ENCODE measurements at regions of chr13 and their contacts with region 1.

Region 1: GRCh38 chr13:27826379-27827353 is 34.4 kb downstream of the GSX1 start:
- DNase-seq: peak; percentile 65
- ATAC-seq: peak; percentile 53
- H3K4me3 Mint-ChIP-seq: no peak overlapping the region
- H3K27ac Mint-ChIP-seq: no peak overlapping the region
- H3K4me1 Mint-ChIP-seq: peaks cover 6% of the 10 kb centered on the region
- H3K27me3 Mint-ChIP-seq: peaks cover 61% of the 10 kb centered on the region
- CTCF ChIP-seq: peak; percentile 96

Region 2: GRCh38 chr13:26946684-26947343 is 879.9 kb before region 1 on chr13:
- CTCF ChIA-PET with region 1: interaction called, 10 read pairs
- POLR2A ChIA-PET with region 1: no interaction called
- intact Hi-C with region 1: loop called (anchors 1 kb)
- DNase-seq: no peak
- ATAC-seq: peak; percentile 58
- H3K4me3 Mint-ChIP-seq: no peak overlapping the region
- H3K27ac Mint-ChIP-seq: no peak overlapping the region
- H3K4me1 Mint-ChIP-seq: no peaks in the 10 kb centered on the region
- H3K27me3 Mint-ChIP-seq: peaks cover 5% of the 10 kb centered on the region
- CTCF ChIP-seq: no peak

Region 3: GRCh38 chr13:27362064-27362883 is 464.4 kb before region 1 on chr13:
- CTCF ChIA-PET with region 1: interaction called, 122 read pairs
- POLR2A ChIA-PET with region 1: interaction called, 3 read pairs
- intact Hi-C with region 1: loop called (anchors 1 kb)
- DNase-seq: peak; percentile 73
- ATAC-seq: peak; percentile 92
- H3K4me3 Mint-ChIP-seq: peak overlapping the region; percentile 35
- H3K27ac Mint-ChIP-seq: no peak overlapping the region
- H3K4me1 Mint-ChIP-seq: peaks cover 9% of the 10 kb centered on the region
- H3K27me3 Mint-ChIP-seq: peaks cover 11% of the 10 kb centered on the region
- CTCF ChIP-seq: peak; percentile 65

Region 4: DNA sequence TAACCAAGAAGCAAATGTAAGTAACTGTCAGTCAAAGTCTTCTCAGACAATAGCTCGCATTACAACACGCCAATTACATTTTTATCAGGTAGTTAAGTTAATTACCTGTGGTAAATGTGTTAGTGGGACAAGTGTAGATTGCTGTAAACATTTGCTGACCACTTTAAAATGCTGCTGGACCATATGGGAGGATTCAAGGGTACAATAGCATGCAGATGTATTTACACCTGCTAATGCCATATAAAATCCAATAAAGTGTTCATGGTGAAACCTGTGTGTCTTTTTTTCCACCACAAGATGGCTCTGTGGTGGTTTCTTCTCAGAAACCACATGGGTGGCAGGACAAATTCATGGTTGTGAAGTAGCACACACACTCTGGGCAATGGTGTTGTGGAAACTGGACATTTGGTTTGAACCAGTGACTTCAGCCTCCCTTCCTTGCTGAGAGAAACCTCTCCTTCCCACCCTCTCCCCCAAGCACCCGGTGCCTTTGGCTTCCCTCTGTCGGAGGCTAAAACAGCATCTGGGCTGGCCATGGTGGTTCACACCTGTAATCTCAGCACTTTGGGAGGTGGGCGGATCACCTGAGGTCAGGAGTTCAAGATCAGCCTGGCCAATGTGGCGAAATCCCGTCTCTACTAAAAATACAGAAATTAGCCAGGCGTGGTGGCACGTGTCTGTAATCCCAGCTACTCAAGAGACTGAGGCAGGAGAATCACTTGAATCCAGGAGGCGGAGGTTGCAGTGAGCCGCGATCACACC is 420.3 kb before region 1 on chr13:
- CTCF ChIA-PET with region 1: interaction called, 46 read pairs
- POLR2A ChIA-PET with region 1: no interaction called
- intact Hi-C with region 1: loop called (anchors 1 kb)
- DNase-seq: no peak
- ATAC-seq: peak; percentile 54
- H3K4me3 Mint-ChIP-seq: no peak overlapping the region
- H3K27ac Mint-ChIP-seq: no peak overlapping the region
- H3K4me1 Mint-ChIP-seq: peaks cover 9% of the 10 kb centered on the region
- H3K27me3 Mint-ChIP-seq: peaks cover 8% of the 10 kb centered on the region
- CTCF ChIP-seq: no peak

Region 5: DNA sequence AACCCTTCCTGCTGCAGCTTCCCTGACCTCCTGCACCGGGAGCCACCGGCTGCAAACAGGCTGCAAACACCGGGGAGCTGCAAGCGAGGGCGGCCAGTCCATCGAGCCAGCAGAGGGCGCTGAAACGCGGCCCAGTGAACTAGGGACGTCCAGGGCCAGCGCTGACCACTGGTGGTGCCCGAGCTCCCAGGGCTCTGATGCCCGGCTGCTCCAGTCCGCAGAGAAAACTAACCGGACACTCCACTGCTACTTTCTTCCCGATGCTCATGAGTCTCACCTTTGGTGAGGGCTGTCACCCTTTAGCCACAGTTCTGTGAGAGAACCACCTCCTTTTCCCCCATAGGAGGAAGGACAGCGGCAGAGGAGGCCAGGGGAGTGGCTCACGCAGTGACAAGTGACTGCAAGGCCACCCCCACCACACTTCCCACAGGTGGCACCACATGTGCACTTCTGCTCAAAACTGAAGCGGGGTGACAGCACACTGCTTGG is 293.5 kb before region 1 on chr13:
- CTCF ChIA-PET with region 1: interaction called, 33 read pairs
- POLR2A ChIA-PET with region 1: no interaction called
- intact Hi-C with region 1: loop called (anchors 1 kb)
- DNase-seq: peak; percentile 39
- ATAC-seq: peak; percentile 72
- H3K4me3 Mint-ChIP-seq: peak overlapping the region; percentile 36
- H3K27ac Mint-ChIP-seq: no peak overlapping the region
- H3K4me1 Mint-ChIP-seq: peaks cover 23% of the 10 kb centered on the region
- H3K27me3 Mint-ChIP-seq: no peaks in the 10 kb centered on the region
- CTCF ChIP-seq: peak; percentile 53

Region 6: DNA sequence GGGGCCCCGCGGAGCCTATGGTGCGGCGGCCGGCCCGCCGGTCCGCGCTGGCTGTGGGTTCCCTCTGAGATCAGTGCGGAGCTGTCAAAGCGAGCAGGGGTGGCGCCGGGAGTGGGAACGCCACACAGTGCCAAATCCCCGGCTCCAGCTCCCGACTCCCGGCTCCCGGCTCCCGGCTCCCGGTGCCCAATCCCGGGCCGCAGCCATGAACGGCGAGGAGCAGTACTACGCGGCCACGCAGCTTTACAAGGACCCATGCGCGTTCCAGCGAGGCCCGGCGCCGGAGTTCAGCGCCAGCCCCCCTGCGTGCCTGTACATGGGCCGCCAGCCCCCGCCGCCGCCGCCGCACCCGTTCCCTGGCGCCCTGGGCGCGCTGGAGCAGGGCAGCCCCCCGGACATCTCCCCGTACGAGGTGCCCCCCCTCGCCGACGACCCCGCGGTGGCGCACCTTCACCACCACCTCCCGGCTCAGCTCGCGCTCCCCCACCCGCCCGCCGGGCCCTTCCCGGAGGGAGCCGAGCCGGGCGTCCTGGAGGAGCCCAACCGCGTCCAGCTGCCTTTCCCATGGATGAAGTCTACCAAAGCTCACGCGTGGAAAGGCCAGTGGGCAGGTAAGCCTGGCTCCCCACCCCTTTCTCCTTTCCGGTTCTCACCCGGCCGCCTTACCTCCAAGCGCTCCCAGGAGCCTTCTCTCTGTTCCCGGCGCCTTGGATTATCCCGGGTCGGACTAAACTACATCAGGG is 93.4 kb after region 1 on chr13 and contains the start of gene PDX1:
- CTCF ChIA-PET with region 1: interaction called, 4 read pairs
- POLR2A ChIA-PET with region 1: no interaction called
- intact Hi-C with region 1: loop called (anchors 2 kb)
- DNase-seq: no peak
- ATAC-seq: peak; percentile 71
- H3K4me3 Mint-ChIP-seq: peak within 1 kb of the TSS; percentile 71
- H3K27ac Mint-ChIP-seq: peak within 1 kb of the TSS; percentile 46
- H3K4me1 Mint-ChIP-seq: peaks cover 41% of the 10 kb centered on the region
- H3K27me3 Mint-ChIP-seq: peaks cover 64% of the 10 kb centered on the region
- CTCF ChIP-seq: no peak
- total RNA-seq, gene PDX1: not detected in 2 replicates

Region 7: GRCh38 chr13:27977476-27978300 is 151.0 kb after region 1 on chr13:
- CTCF ChIA-PET with region 1: interaction called, 230 read pairs
- POLR2A ChIA-PET with region 1: no interaction called
- intact Hi-C with region 1: no loop called
- DNase-seq: no peak
- ATAC-seq: no peak
- H3K4me3 Mint-ChIP-seq: no peak overlapping the region
- H3K27ac Mint-ChIP-seq: no peak overlapping the region
- H3K4me1 Mint-ChIP-seq: peaks cover 36% of the 10 kb centered on the region
- H3K27me3 Mint-ChIP-seq: peaks cover 79% of the 10 kb centered on the region
- CTCF ChIP-seq: no peak

Region 8: GRCh38 chr13:29162638-29163235 is 1336.1 kb after region 1 on chr13:
- CTCF ChIA-PET with region 1: no interaction called
- POLR2A ChIA-PET with region 1: no interaction called
- intact Hi-C with region 1: no loop called
- DNase-seq: no peak
- ATAC-seq: no peak
- H3K4me3 Mint-ChIP-seq: no peak overlapping the region
- H3K27ac Mint-ChIP-seq: no peak overlapping the region
- H3K4me1 Mint-ChIP-seq: no peaks in the 10 kb centered on the region
- H3K27me3 Mint-ChIP-seq: peaks cover 5% of the 10 kb centered on the region
- CTCF ChIP-seq: no peak

Measured in activated B cell treated with CpG ODN at 0.5 μM for 24 hours (primary cell).